ENCODE measurements at regions of chr5 and their contacts with region 1.

Region 1: GRCh38 chr5:131789765-131790164 is 7.1 kb downstream of the FNIP1 start:
- DNase-seq: no peak
- H3K4me3 Mint-ChIP-seq: no peak overlapping the region
- H3K27ac Mint-ChIP-seq: no peak overlapping the region
- H3K4me1 Mint-ChIP-seq: peaks cover 31% of the 10 kb centered on the region
- H3K27me3 Mint-ChIP-seq: no peaks in the 10 kb centered on the region
- CTCF ChIP-seq: no peak

Region 2: DNA sequence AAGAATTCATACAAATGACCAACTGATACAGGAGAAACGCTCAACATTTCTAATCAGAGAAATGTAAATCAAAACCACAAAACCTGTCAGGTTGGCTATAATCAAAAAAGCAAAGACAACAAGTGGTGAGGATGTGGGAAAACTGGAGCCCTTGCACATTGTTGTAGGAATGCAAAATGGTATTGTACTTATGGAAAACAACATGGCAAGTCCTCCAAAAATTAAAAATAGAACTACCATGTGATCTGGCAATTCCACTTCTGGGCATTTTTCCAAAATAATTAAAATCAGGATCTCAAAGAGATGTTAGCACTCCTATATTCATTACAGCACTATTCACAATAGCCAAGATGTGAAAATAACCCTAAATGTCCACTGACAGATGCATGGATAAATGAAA is 69.1 kb before region 1 on chr5:
- CTCF ChIA-PET with region 1: no interaction called
- intact Hi-C with region 1: no loop called
- DNase-seq: no peak
- H3K4me3 Mint-ChIP-seq: no peak overlapping the region
- H3K27ac Mint-ChIP-seq: no peak overlapping the region
- H3K4me1 Mint-ChIP-seq: no peaks in the 10 kb centered on the region
- H3K27me3 Mint-ChIP-seq: no peaks in the 10 kb centered on the region
- CTCF ChIP-seq: no peak

Region 3: GRCh38 chr5:131735393-131735792 is 54.4 kb before region 1 on chr5:
- CTCF ChIA-PET with region 1: no interaction called
- intact Hi-C with region 1: no loop called
- DNase-seq: no peak
- H3K4me3 Mint-ChIP-seq: no peak overlapping the region
- H3K27ac Mint-ChIP-seq: no peak overlapping the region
- H3K4me1 Mint-ChIP-seq: no peaks in the 10 kb centered on the region
- H3K27me3 Mint-ChIP-seq: no peaks in the 10 kb centered on the region
- CTCF ChIP-seq: no peak

Region 4: GRCh38 chr5:131773805-131774204 is 16.0 kb before region 1 on chr5:
- CTCF ChIA-PET with region 1: no interaction called
- intact Hi-C with region 1: loop called (anchors 2 kb)
- DNase-seq: no peak
- H3K4me3 Mint-ChIP-seq: no peak overlapping the region
- H3K27ac Mint-ChIP-seq: peak overlapping the region; percentile 17
- H3K4me1 Mint-ChIP-seq: peaks cover 9% of the 10 kb centered on the region
- H3K27me3 Mint-ChIP-seq: no peaks in the 10 kb centered on the region
- CTCF ChIP-seq: no peak